ENCODE measurements at regions of chr4 and their contacts with region 1.

Region 1: DNA sequence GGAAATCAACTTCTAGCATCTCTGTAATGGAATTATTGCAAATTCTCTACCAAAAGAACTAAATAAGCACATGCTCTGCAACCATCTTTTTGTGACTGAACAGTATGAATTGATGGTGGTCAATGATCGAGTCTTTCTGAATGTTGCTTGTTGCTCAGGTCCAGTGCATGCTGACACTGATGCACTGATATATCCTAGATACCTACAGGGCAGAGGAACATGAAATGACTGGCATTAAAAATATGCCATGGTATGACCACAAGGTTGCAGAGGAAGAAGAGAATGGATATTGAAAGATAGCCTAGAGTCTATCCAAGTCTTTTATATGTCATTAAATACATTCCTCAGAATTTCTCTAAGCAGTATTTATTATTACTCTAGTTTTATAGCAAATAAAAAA is 692.8 kb upstream of the TENM3 start:
- DNase-seq: no peak
- H3K4me3 ChIP-seq: no peak overlapping the region
- H3K27ac ChIP-seq: no peak overlapping the region
- H3K4me1 ChIP-seq: no peaks in the 10 kb centered on the region
- H3K27me3 ChIP-seq: no peaks in the 10 kb centered on the region
- CTCF ChIP-seq: no peak
- POLR2A ChIP-seq: no peak

Region 2: GRCh38 chr4:181536811-181537434 is 13.5 kb before region 1 on chr4:
- intact Hi-C with region 1: loop called (anchors 2 kb)
- DNase-seq: no peak
- H3K4me3 ChIP-seq: no peak overlapping the region
- H3K27ac ChIP-seq: no peak overlapping the region
- H3K4me1 ChIP-seq: no peaks in the 10 kb centered on the region
- H3K27me3 ChIP-seq: no peaks in the 10 kb centered on the region
- CTCF ChIP-seq: no peak
- POLR2A ChIP-seq: no peak

Measured in testis (tissue), 5 donors.